ENCODE measurements at regions of chr14 and their contacts with region 1.

Region 1: DNA sequence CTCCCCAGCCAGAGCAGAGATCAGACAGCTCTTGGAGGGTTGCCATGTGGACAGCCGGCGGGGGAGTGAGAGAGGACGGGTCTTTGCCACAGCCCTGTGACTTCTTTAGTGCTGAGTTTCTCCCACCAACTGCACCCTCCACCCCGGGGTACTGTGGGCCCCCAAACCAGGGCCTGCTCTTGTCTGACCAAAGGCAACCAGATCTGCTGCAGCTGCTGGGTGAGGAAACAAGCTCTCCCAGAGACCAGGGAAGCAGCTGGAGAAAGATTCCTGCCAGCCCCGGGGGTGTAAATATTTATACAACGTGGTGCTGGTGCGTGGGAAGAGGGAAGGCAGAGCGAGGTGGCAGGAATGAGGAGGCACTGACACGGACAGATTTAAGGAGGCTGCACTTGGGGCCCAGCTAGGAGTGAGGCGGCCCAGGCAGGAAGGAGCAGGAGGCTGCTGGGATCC is 14.3 kb upstream of the ZFP36L1 start:
- DNase-seq: no peak
- ATAC-seq: no peak
- H3K4me3 Mint-ChIP-seq: no peak overlapping the region
- H3K27ac Mint-ChIP-seq: no peak overlapping the region
- H3K4me1 Mint-ChIP-seq: peaks cover 14% of the 10 kb centered on the region
- H3K27me3 Mint-ChIP-seq: no peaks in the 10 kb centered on the region

Region 2: DNA sequence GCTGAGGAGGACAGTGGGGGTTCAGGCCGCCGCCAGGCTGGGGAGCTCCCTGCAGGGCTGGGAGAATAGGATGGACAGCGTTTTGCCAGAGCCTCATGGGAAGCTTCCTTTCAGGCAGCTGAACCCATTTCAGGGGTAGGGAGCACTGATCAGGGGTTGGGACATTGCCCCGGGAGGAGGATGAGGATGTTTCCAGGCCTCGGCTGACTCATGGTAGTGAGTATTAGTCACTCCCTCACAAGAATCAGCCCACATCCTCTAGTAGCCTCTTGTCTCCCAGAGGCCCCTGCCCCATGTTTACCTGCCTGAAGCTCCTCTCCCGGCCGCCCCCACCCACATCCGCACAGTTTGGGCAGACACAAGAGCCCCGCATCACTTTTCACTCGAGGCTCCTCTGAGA is 104.1 kb before region 1 on chr14:
- CTCF ChIA-PET with region 1: no interaction called
- POLR2A ChIA-PET with region 1: no interaction called
- DNase-seq: no peak
- ATAC-seq: no peak
- H3K4me3 Mint-ChIP-seq: no peak overlapping the region
- H3K27ac Mint-ChIP-seq: no peak overlapping the region
- H3K4me1 Mint-ChIP-seq: no peaks in the 10 kb centered on the region
- H3K27me3 Mint-ChIP-seq: peaks cover 5% of the 10 kb centered on the region

Region 3: GRCh38 chr14:68795597-68796417 is 11.4 kb before region 1 on chr14:
- CTCF ChIA-PET with region 1: interaction called, 246 read pairs
- POLR2A ChIA-PET with region 1: interaction called, 314 read pairs
- DNase-seq: peak; percentile 86
- ATAC-seq: peak; percentile 50
- H3K4me3 Mint-ChIP-seq: peak overlapping the region; percentile 87
- H3K27ac Mint-ChIP-seq: peak overlapping the region; percentile 100
- H3K4me1 Mint-ChIP-seq: peaks cover 41% of the 10 kb centered on the region
- H3K27me3 Mint-ChIP-seq: no peaks in the 10 kb centered on the region